B cell (primary cell): ENCODE measurements at regions of chr17 and their contacts with region 1.

Region 1: GRCh38 chr17:80866147-80866793 is 125.4 kb upstream of the CHMP6 start:
- DNase-seq: peak; percentile 71
- ATAC-seq: peak; percentile 85
- H3K4me3 ChIP-seq: no peak overlapping the region
- H3K4me3 Mint-ChIP-seq: no peak overlapping the region
- H3K27ac ChIP-seq: no peak overlapping the region
- H3K27ac Mint-ChIP-seq: no peak overlapping the region
- H3K4me1 ChIP-seq: peaks cover 6 to 10% of the 10 kb centered on the region in 2 donors
- H3K4me1 Mint-ChIP-seq: peaks cover 24% of the 10 kb centered on the region
- H3K27me3 ChIP-seq: no peaks in the 10 kb centered on the region
- H3K27me3 Mint-ChIP-seq: no peaks in the 10 kb centered on the region
- CTCF ChIP-seq: peak; percentile 75

Region 2: DNA sequence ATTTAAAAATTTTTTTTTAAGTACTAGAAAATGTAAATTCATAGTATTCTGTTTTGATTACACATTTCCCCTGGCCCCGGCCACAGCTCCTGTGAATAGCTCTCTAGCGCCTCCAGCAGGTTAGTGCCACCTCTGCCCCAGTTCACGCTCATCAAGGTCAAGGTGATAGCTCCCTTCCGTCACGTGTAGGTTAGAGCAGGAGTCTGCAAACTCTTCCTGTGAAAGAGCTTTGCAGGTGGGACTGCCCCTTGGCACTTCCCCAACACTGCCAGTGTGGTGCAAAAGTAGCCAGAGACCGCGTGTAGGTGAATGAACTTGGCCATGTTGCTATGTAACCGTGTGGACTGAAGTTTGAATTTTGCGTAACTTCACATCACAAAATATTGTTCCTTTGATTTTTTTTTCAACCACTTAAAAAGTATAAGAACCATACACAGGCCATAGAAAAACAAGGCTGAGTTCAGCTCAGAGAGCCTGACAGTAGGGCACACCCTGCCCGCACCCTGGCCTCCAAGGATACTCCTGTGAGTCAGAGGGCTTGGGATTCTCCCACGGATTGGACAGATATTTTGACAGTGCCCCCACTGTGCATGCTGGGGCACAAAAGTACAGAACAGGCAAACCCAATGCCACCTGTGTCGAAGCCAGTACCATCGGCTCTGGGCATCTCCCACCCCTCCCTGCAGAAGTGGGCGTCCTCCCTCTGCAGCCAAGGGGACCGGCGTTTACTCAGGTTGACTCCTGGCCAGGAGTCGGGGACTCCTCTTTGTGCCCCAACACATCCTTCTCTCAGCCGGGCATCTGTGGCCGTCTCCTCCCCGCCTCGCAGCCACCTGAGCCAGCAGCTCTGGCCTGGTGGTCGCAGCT is 33.4 kb after region 1 on chr17:
- CTCF ChIA-PET with region 1: interaction called, 11 read pairs
- POLR2A ChIA-PET with region 1: no interaction called
- intact Hi-C with region 1: no loop called
- DNase-seq: peak; percentile 44
- ATAC-seq: no peak
- H3K4me3 ChIP-seq: no peak overlapping the region
- H3K4me3 Mint-ChIP-seq: no peak overlapping the region
- H3K27ac ChIP-seq: peak overlapping the region in 1 of 2 donors; percentile 91
- H3K27ac Mint-ChIP-seq: peak overlapping the region; percentile 15
- H3K4me1 ChIP-seq: peaks cover 29 to 30% of the 10 kb centered on the region in 2 donors
- H3K4me1 Mint-ChIP-seq: peaks cover 22% of the 10 kb centered on the region
- H3K27me3 ChIP-seq: no peaks in the 10 kb centered on the region
- H3K27me3 Mint-ChIP-seq: no peaks in the 10 kb centered on the region
- CTCF ChIP-seq: peak; percentile 47

Region 3: GRCh38 chr17:80927791-80928216 is 61.5 kb after region 1 on chr17:
- CTCF ChIA-PET with region 1: no interaction called
- POLR2A ChIA-PET with region 1: no interaction called
- intact Hi-C with region 1: loop called (anchors 5 kb)
- DNase-seq: no peak
- ATAC-seq: no peak
- H3K4me3 ChIP-seq: no peak overlapping the region
- H3K4me3 Mint-ChIP-seq: no peak overlapping the region
- H3K27ac ChIP-seq: no peak overlapping the region
- H3K27ac Mint-ChIP-seq: no peak overlapping the region
- H3K4me1 ChIP-seq: peaks cover 31 to 38% of the 10 kb centered on the region in 2 donors
- H3K4me1 Mint-ChIP-seq: peaks cover 5% of the 10 kb centered on the region
- H3K27me3 ChIP-seq: no peaks in the 10 kb centered on the region
- H3K27me3 Mint-ChIP-seq: no peaks in the 10 kb centered on the region
- CTCF ChIP-seq: no peak

Region 4: DNA sequence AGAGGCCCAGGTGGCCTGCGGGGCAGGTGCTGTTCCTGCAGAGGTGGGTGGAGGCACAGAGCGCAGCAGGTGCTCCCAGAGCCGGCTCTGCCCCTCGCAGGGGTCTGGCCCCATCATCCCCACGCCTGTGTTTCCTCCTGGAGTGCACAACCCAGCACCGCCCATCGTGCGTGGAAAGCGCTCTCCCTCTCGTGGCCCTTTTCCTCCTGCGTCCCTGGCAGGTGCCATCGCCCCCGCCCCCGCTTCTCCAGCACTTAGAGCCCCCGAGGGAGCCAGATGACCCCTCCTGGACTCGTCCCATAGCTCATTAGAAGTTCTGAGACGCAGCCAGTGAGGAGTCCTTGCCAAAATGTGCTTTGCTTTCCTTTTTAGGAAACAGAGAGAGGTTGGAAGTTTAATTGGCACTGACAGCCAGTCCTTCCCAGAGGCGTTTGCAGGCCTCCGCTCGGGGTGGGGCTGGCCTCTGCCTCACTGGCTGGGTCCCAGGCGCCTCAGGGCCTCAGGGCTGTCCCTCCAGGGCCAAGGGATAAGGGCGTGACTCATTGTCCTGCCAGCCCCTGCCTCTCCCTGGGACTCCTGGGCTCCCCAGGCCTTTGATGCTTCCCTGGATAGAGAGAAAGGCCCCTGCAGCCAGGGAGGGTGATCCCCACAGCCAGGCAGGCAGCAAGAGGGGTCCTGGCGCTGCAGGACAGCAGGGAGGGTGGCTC is 93.2 kb after region 1 on chr17:
- CTCF ChIA-PET with region 1: interaction called, 10 read pairs
- POLR2A ChIA-PET with region 1: no interaction called
- intact Hi-C with region 1: no loop called
- DNase-seq: no peak
- ATAC-seq: no peak
- H3K4me3 ChIP-seq: no peak overlapping the region
- H3K4me3 Mint-ChIP-seq: no peak overlapping the region
- H3K27ac ChIP-seq: no peak overlapping the region
- H3K27ac Mint-ChIP-seq: no peak overlapping the region
- H3K4me1 ChIP-seq: peaks cover 18 to 30% of the 10 kb centered on the region in 2 donors
- H3K4me1 Mint-ChIP-seq: peaks cover 16% of the 10 kb centered on the region
- H3K27me3 ChIP-seq: no peaks in the 10 kb centered on the region
- H3K27me3 Mint-ChIP-seq: no peaks in the 10 kb centered on the region
- CTCF ChIP-seq: no peak